ENCODE measurements at regions of chr20 and their contacts with region 1.

Region 1: GRCh38 chr20:50987592-50988210 is 29.1 kb downstream of the MOCS3 start:
- DNase-seq: peak; percentile 85 to 90
- H3K4me3 ChIP-seq: no peak overlapping the region
- H3K4me1 ChIP-seq: no peaks in the 10 kb centered on the region
- H3K27me3 ChIP-seq: no peaks in the 10 kb centered on the region

Region 2: GRCh38 chr20:50546729-50547314 is 440.9 kb before region 1 on chr20:
- in situ Hi-C with region 1: no loop called
- DNase-seq: no peak
- H3K4me3 ChIP-seq: no peak overlapping the region
- H3K4me1 ChIP-seq: peaks cover 8% of the 10 kb centered on the region
- H3K27me3 ChIP-seq: no peaks in the 10 kb centered on the region

Region 3: DNA sequence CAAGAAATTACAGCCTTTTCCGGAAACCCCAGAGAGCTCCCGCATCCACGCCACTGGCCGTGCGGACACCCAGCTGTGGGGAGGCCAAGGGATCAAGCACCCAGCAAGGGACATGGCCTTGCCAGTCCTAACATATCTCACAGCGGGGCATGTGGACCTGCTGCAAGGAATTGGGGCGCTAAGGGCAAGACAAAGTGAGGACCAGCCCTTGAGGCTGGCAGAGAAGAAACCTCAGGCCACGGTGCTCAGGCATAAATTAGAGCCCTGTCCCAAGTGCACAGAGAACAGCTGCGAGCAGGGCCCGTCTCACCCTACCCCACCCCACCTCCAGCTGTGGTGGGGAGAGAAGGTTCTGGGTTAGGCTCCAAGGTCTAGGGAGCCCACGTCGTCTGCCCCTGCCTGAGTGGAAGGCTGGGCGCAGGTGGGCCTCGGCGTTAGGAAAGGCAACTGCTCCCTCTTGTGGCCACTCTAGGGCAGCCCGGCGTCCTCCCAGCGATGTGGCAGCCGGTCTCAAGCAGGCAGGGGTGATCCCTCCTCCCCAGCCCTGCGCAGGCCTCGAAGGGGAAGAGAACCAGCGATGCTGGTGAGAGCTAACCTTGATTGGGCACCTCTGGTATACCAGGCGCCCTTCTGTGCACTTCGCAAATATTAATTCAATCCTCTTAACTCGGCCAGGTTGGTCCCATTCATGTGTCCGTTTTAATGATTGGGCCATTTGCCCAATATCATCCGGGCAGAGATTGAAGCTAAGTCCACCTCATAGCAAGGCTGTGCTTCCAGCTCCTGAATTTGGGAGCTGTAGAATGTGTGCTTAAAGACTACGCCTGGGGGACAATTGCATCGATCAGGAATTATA is 319.0 kb after region 1 on chr20:
- in situ Hi-C with region 1: loop called (anchors 5 kb)
- DNase-seq: peak; percentile 69 to 91
- H3K4me3 ChIP-seq: no peak overlapping the region
- H3K4me1 ChIP-seq: peaks cover 24% of the 10 kb centered on the region
- H3K27me3 ChIP-seq: no peaks in the 10 kb centered on the region

Region 4: GRCh38 chr20:51624157-51624731 is 636.5 kb after region 1 on chr20:
- in situ Hi-C with region 1: loop called (anchors 5 kb)
- DNase-seq: peak; percentile 63 to 87
- H3K4me3 ChIP-seq: no peak overlapping the region
- H3K4me1 ChIP-seq: no peaks in the 10 kb centered on the region
- H3K27me3 ChIP-seq: no peaks in the 10 kb centered on the region

Region 5: DNA sequence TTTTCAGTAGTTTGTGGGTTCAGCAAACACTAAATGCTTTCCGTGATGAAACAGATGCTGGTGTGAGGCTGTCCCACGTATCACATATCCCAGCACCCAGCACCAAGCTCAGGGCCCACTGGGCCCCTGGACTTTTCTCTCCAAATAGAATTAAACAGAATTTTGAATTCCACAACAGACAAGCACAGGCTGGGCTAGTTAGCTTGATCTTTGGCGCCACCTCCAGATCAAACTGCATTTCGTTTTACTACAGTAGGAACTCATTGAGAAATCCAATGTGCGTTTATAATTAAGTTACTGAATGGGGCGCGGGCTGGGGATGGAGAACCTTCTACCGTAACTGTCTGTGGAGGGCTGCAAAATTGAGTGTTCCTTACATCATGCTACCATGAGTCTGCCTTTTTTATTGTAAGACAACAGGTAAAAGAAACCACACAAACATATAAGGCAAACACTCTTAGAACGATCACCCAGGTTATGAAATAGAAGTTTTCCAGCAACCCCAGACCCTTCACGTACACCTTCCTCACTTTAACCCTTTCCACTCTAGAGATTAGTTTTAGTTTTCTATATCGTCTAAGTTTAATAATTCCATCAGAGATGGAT is 1096.0 kb after region 1 on chr20:
- in situ Hi-C with region 1: loop called (anchors 25 kb)
- DNase-seq: peak; percentile 76 to 84
- H3K4me3 ChIP-seq: no peak overlapping the region
- H3K4me1 ChIP-seq: peaks cover 3% of the 10 kb centered on the region; the same call in 1 of the 2 replicates
- H3K27me3 ChIP-seq: no peaks in the 10 kb centered on the region